ENCODE measurements at regions of chr11 and their contacts with region 1.

Region 1: GRCh38 chr11:77066229-77067042 is at the start of gene CAPN5:
- DNase-seq: peak; percentile 82
- H3K4me3 ChIP-seq: peak within 1 kb of the TSS; percentile 60
- CTCF ChIP-seq: peak; percentile 41

Region 2: GRCh38 chr11:77121096-77121640 is 54.7 kb after region 1 on chr11:
- in situ Hi-C with region 1: loop called (anchors 5 kb)
- DNase-seq: no peak
- H3K4me3 ChIP-seq: no peak overlapping the region
- CTCF ChIP-seq: no peak

Region 3: DNA sequence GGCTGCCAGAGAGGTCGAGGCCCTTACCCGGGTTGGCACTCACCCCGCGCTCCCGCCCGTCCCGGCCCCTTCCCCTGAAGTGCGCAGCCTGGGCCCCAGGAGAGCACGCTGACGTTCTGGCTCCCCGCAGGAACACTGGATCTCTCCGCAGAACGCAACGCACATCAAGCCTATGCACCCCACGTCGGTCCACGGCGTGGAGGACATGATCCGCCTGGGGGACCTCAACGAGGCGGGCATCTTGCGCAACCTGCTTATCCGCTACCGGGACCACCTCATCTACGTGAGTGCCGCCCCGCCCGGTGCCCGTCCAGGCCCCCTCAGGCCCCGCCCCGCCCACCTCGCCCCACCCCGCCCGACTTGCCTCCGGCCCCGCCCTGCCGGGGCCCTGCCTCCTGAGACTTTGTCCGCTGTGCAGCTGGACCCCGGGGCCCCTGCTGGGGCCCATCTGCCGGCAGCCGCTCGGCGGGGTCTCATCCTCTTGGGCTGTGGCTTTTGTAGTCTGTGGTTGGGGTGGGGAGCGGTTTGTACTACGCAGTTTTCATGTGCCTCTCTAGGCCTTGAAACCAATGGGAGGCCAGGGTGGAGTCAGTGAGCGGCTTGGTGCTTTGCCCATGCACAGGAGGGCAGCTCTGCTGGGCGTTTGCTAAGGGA is 81.4 kb after region 1 on chr11:
- in situ Hi-C with region 1: loop called (anchors 10 kb)
- DNase-seq: peak; percentile 27
- H3K4me3 ChIP-seq: no peak overlapping the region
- CTCF ChIP-seq: no peak